AG04450 (cell line): ENCODE measurements at regions of chr6 and their contacts with region 1.

Region 1: GRCh38 chr6:12289933-12290820 is at the start of gene EDN1:
- DNase-seq: peak; percentile 50
- H3K4me3 ChIP-seq: peak within 1 kb of the TSS; percentile 71
- H3K27ac ChIP-seq: peak within 1 kb of the TSS; percentile 88
- H3K27me3 ChIP-seq: no peaks in the 10 kb centered on the region
- CTCF ChIP-seq: peak; percentile 70
- polyA plus RNA-seq, gene EDN1: 1.7 and 2.1 TPM in 2 replicates

Region 2: GRCh38 chr6:12001004-12001705 is 289.0 kb before region 1 on chr6:
- CTCF ChIA-PET with region 1: no interaction called
- POLR2A ChIA-PET with region 1: no interaction called
- DNase-seq: no peak
- H3K4me3 ChIP-seq: no peak overlapping the region
- H3K27ac ChIP-seq: no peak overlapping the region
- H3K27me3 ChIP-seq: no peaks in the 10 kb centered on the region
- CTCF ChIP-seq: no peak

Region 3: GRCh38 chr6:12081771-12082170 is 208.4 kb before region 1 on chr6:
- CTCF ChIA-PET with region 1: no interaction called
- POLR2A ChIA-PET with region 1: no interaction called
- DNase-seq: no peak
- H3K4me3 ChIP-seq: no peak overlapping the region
- H3K27ac ChIP-seq: no peak overlapping the region
- H3K27me3 ChIP-seq: no peaks in the 10 kb centered on the region
- CTCF ChIP-seq: no peak

Region 4: GRCh38 chr6:12258196-12259075 is 31.7 kb before region 1 on chr6:
- CTCF ChIA-PET with region 1: interaction called, 11 read pairs
- POLR2A ChIA-PET with region 1: no interaction called
- DNase-seq: no peak
- H3K4me3 ChIP-seq: no peak overlapping the region
- H3K27ac ChIP-seq: no peak overlapping the region
- H3K27me3 ChIP-seq: no peaks in the 10 kb centered on the region
- CTCF ChIP-seq: no peak

Region 5: GRCh38 chr6:12324514-12325147 is 34.5 kb after region 1 on chr6:
- CTCF ChIA-PET with region 1: interaction called, 4 read pairs
- POLR2A ChIA-PET with region 1: interaction called, 10 read pairs
- DNase-seq: no peak
- H3K4me3 ChIP-seq: no peak overlapping the region
- H3K27ac ChIP-seq: no peak overlapping the region
- H3K27me3 ChIP-seq: no peaks in the 10 kb centered on the region
- CTCF ChIP-seq: no peak

Region 6: GRCh38 chr6:12483712-12484111 is 193.5 kb after region 1 on chr6:
- CTCF ChIA-PET with region 1: interaction called, 10 read pairs
- POLR2A ChIA-PET with region 1: no interaction called
- DNase-seq: peak; percentile 86
- H3K4me3 ChIP-seq: peak overlapping the region; percentile 37
- H3K27ac ChIP-seq: peak overlapping the region; percentile 47
- H3K27me3 ChIP-seq: no peaks in the 10 kb centered on the region
- CTCF ChIP-seq: no peak

Region 7: GRCh38 chr6:12605888-12606345 is 315.7 kb after region 1 on chr6:
- CTCF ChIA-PET with region 1: interaction called, 220 read pairs
- POLR2A ChIA-PET with region 1: no interaction called
- DNase-seq: peak; percentile 36
- H3K4me3 ChIP-seq: no peak overlapping the region
- H3K27ac ChIP-seq: no peak overlapping the region
- H3K27me3 ChIP-seq: no peaks in the 10 kb centered on the region
- CTCF ChIP-seq: peak; percentile 82